Posterior vena cava (tissue), 2 donors: ENCODE measurements at regions of chr17 and their contacts with region 1.

Region 1: DNA sequence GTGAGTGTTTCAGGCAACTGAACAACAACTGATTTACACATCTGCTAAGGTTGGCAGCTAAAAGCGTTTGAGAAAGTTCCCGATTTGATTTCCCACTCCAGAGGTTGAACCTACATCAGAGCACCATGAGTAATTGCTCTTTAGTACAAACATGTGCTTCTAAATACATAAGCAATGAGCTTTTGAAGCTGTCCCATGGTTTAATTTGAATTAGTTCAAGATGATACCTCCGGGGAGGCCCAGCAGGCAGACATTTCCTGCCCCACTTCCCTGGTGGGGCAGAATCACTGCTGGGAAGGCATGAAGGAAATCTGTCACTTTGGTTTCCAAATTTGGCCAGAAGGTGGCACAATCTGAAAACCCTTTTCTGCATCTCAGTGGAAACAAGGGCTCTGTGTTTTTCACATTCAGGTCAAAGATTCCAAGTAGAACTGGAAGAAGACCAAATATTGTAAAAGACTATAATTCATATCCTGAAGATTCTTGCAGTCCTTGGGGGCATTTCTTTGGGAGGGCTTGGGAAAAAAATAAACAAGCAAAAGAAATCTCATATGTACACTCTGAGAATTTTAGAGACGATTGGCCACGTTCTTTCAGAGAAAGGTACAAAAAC is 176.2 kb upstream of the FAM20A start:
- DNase-seq: no peak

Region 2: DNA sequence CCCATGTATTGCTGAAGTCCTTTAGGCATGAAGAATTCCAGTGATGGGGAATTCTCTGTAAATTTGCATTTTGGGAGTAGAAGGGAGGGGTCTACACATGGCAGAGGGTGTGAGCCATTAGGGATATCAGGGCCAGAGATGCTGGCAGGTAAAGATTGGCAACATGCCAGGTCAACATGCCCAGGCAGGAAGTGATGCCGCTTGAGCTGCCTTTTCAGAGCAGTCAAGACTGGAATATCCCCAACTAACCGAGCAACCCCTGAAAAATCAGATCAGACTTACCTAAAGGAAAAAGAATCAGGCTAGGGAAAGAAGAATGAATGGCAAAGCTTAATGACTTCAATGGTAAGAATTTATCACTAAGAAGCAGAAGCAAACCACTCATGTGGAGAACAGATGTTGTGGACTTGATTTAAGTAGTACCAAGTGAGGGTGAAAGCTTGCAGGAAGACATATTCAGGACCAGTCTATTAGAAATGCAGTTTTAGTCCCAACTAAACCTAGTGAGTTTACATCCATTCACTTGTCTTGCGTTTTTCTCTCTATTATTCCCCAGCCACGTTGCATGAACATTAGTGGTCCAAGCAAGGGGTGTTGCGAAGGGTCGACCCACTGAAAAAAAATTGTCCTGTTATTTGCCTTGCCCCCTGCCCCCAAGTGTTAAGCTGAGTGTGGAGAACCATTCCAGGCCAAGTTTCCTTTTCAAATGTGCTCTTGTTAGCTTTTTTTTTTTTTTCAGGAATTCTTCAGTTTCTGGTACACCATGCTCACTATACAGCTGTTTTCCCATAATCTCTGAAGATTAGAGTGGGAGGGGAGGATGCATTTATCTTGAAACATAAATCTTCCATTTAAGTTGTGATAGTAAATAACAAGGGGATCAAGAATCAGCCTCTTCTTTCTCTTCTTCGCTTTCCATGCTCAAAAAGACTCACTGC is 72.6 kb after region 1 on chr17:
- intact Hi-C with region 1: no loop called
- DNase-seq: no peak

Region 3: DNA sequence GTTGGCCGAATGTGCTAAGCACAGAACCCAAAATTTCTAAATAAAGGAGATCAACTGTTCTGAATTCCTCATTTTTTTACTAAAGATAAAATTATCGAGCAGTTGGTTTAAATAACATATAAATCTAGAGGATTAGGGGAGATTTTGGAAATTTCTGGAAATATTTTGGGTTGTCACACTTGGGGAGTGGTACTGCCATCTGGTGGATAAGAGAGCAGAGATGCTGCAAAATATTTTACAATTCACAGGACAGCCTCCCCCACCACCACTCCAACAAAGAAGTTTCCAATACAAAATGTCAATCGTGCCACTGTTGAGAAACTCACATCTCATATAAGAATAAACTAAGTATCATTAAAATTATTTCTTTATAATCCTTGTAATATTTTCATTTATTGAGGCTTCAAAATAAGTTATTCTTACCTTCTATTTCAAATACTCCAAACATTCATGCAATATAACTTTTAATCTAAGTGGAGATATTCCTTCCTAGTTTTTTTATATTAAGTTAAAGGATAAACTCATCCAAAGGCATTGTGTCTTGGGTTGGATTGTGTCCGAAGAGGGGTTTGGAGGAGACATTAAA is 194.9 kb after region 1 on chr17:
- intact Hi-C with region 1: loop called (anchors 5 kb)
- DNase-seq: no peak